ENCODE measurements at regions of chr5 and their contacts with region 1.

Region 1: GRCh38 chr5:56909294-56910209 is at the start of gene SETD9:
- DNase-seq: peak; percentile 90
- H3K4me3 Mint-ChIP-seq: peak within 1 kb of the TSS; percentile 90
- H3K27ac Mint-ChIP-seq: peak within 1 kb of the TSS; percentile 95
- H3K4me1 Mint-ChIP-seq: peaks cover 25% of the 10 kb centered on the region
- H3K27me3 Mint-ChIP-seq: peaks cover 19% of the 10 kb centered on the region
- total RNA-seq, gene SETD9: 13.6 and 14.9 TPM in 2 replicates

Region 2: DNA sequence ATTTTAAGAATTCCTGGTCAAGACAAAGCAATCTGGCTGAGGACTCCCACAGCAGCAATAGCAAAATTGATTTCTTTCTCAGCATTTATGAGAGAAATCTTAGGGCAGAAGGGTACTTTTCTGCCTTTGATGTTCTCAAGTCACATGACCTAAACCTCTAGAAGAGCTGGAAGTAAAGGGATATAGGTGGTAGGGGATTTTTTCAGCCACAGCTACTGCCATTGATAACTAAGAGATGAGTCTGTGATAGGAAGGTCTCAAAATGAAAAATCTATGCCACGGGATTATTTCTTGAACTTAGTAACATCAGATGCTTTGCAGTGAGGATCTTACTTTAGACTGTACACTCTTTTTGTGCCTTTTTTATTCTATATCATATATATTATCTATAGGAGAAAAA is 950.3 kb before region 1 on chr5:
- intact Hi-C with region 1: no loop called
- DNase-seq: no peak
- H3K4me3 Mint-ChIP-seq: no peak overlapping the region
- H3K27ac Mint-ChIP-seq: peak overlapping the region; percentile 75
- H3K4me1 Mint-ChIP-seq: peaks cover 25% of the 10 kb centered on the region
- H3K27me3 Mint-ChIP-seq: no peaks in the 10 kb centered on the region

Region 3: GRCh38 chr5:56951946-56952691 is 42.6 kb after region 1 on chr5 and contains the start of gene MIER3:
- intact Hi-C with region 1: loop called (anchors 1 kb)
- DNase-seq: peak; percentile 82
- H3K4me3 Mint-ChIP-seq: peak within 1 kb of the TSS; percentile 95
- H3K27ac Mint-ChIP-seq: peak within 1 kb of the TSS; percentile 45
- H3K4me1 Mint-ChIP-seq: peaks cover 23% of the 10 kb centered on the region
- H3K27me3 Mint-ChIP-seq: peaks cover 24% of the 10 kb centered on the region
- total RNA-seq, gene MIER3: 33.6 and 35.9 TPM in 2 replicates

Region 4: DNA sequence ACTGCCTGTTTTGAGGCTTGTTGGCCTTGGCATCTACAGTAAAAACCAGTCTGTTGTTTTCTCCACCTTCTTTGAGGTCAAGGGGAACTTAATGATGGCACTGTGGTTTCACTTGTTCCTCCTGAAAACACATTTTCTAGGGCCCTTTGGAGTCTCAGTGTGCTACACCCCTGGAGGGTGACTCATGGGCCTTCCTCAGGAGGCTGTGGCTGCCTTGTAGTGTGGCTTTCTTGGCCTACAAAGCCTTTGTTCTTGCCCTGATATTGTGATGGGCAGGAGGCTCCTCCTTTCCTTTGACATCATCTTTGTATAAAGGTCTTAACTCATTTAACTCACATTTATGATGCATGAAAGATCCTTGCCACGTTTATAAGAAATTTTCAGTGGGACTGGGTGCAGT is 208.0 kb after region 1 on chr5:
- intact Hi-C with region 1: loop called (anchors 1 kb)
- DNase-seq: peak; percentile 70
- H3K4me3 Mint-ChIP-seq: peak overlapping the region; percentile 54
- H3K27ac Mint-ChIP-seq: peak overlapping the region; percentile 81
- H3K4me1 Mint-ChIP-seq: peaks cover 23% of the 10 kb centered on the region
- H3K27me3 Mint-ChIP-seq: no peaks in the 10 kb centered on the region

Region 5: DNA sequence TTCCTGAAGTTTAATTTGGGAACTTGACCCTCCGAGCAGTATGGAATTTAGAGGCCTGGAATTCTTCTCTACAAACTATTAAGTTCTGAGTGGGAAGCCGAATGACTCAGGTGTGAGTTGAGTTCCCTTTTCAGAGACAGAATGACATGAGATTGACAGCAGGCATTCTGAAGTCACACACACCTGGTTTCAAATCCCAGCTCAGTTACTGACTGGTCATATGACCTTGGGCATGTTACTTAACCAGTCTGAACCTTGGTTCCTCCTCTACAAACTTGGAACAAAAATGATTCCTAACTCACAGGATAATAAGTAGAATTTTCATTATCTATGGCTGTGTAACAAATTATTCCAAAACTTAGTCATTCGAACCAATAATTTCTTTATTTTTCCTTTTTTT is 218.8 kb after region 1 on chr5:
- intact Hi-C with region 1: no loop called
- DNase-seq: no peak
- H3K4me3 Mint-ChIP-seq: no peak overlapping the region
- H3K27ac Mint-ChIP-seq: no peak overlapping the region
- H3K4me1 Mint-ChIP-seq: no peaks in the 10 kb centered on the region
- H3K27me3 Mint-ChIP-seq: peaks cover 13% of the 10 kb centered on the region

Region 6: GRCh38 chr5:57221049-57221568 is 311.6 kb after region 1 on chr5:
- intact Hi-C with region 1: loop called (anchors 2 kb)
- DNase-seq: peak; percentile 17
- H3K4me3 Mint-ChIP-seq: no peak overlapping the region
- H3K27ac Mint-ChIP-seq: no peak overlapping the region
- H3K4me1 Mint-ChIP-seq: peaks cover 18% of the 10 kb centered on the region
- H3K27me3 Mint-ChIP-seq: no peaks in the 10 kb centered on the region

Region 7: DNA sequence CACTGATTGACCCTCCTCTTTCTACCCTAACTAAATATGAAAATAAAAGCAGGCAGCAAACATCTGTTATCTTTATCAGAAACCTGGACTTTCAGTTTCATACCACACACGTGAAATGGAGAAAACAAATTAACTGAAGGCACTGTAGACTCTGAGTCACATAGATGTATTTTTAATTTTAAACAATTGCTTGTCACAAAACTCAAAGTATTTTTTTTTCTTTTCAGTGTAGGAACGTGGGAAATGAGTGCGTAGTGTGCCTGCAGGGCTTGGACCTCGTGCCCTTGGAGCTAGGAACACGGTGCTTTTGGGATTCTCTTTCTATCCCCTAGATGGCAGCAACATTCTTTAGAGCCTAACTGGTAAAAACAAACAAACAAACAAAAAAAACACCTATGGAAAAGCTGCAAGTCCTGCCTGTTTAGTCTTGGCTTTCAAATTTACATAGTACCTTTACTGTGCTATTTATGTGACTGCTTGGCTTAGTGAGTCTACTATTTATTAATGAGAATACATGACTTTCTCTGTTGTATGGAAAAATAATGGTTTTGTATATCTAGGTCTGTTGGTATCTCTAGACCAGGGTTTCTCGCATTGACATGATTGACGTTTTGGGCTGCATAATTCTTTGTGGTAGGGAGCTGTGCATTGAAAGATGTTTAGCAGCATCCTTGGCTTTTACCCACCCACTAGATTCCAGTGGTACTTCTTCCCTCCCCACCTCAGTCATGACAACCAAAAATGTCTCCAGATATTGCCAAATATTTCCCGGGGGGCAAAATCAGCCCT is 589.9 kb after region 1 on chr5:
- intact Hi-C with region 1: loop called (anchors 10 kb)
- DNase-seq: no peak
- H3K4me3 Mint-ChIP-seq: peak overlapping the region; percentile 61
- H3K27ac Mint-ChIP-seq: no peak overlapping the region
- H3K4me1 Mint-ChIP-seq: peaks cover 36% of the 10 kb centered on the region
- H3K27me3 Mint-ChIP-seq: peaks cover 2% of the 10 kb centered on the region

Measured in activated T-helper 1 cell treated with anti-CD3 and anti-CD28 coated beads, Interleukin-12 subunit alpha, Interleukin-12 subunit beta, Interleukin-2, Interleukin-4 antibody, amounts not matched to agents 30 ng/mL and 10 ng/mL and 1 ng/mL, durations not matched to agents 14 hours and 24 hours and 36 hours (primary cell).